Esophagus squamous epithelium (tissue), 5 donors: ENCODE measurements at regions of chr6 and their contacts with region 1.

Region 1: GRCh38 chr6:166097915-166098522 is 69.6 kb downstream of the TBXT start:
- DNase-seq: no peak
- H3K4me3 ChIP-seq: peak overlapping the region in 3 of 4 donors; percentile 25 to 42 (median 26)
- H3K27ac ChIP-seq: no peak overlapping the region
- H3K4me1 ChIP-seq: no peaks in the 10 kb centered on the region
- H3K27me3 ChIP-seq: peaks cover 0 to 8% (median 0%) of the 10 kb centered on the region in 4 donors
- CTCF ChIP-seq: peak; percentile 32 to 69 (median 56)
- POLR2A ChIP-seq: no peak

Region 2: DNA sequence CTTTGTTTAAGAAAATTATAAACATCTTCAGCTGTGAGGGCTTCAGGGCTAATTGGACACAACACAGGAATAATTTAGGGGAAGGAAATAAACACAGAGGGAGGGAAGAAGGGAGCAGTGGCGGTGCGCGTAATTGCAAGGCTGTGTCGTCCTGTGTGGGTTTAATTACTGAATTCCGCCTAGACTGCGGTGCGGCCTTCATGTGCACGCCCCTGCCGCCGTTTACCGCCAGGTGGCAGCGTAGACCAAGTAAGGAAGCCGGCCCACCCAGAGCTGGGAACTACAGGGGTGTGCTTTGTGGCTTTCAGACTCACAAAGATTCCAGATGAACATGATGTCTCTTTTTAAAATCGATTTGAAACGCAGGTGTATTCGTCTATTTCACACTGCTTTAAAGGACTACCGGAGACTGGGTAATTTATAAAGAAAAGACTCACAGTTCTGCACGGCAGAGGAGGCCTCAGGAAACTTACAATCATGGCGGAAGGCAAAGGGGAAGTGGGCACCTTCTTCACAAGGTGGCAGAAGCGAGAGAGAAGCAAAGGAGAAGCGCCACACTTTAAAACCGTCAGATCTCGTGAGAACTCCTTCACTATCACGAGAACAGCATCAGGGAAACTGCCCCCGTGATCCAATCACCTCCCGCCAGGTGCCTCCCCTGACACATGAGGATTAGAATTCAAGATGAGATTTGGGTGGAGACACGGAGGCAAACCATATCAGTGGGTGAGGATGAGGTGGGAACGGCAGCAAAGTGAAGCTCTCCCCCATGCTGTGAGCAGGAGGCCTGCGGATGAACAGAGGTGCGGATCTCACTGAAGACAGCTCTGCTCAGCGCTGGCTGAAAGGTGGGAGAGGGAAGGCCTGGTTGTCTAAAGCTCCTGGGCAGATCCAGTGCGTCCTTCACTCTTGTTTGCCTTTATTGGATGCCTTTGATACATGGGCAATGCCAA is 212.9 kb before region 1 on chr6:
- intact Hi-C with region 1: loop called (anchors 5 kb)
- DNase-seq: no peak
- H3K4me3 ChIP-seq: no peak overlapping the region
- H3K27ac ChIP-seq: no peak overlapping the region
- H3K4me1 ChIP-seq: peaks cover 0 to 7% (median 0%) of the 10 kb centered on the region in 3 donors
- H3K27me3 ChIP-seq: no peaks in the 10 kb centered on the region
- CTCF ChIP-seq: peak; percentile 60 to 78 (median 72)
- POLR2A ChIP-seq: no peak

Region 3: DNA sequence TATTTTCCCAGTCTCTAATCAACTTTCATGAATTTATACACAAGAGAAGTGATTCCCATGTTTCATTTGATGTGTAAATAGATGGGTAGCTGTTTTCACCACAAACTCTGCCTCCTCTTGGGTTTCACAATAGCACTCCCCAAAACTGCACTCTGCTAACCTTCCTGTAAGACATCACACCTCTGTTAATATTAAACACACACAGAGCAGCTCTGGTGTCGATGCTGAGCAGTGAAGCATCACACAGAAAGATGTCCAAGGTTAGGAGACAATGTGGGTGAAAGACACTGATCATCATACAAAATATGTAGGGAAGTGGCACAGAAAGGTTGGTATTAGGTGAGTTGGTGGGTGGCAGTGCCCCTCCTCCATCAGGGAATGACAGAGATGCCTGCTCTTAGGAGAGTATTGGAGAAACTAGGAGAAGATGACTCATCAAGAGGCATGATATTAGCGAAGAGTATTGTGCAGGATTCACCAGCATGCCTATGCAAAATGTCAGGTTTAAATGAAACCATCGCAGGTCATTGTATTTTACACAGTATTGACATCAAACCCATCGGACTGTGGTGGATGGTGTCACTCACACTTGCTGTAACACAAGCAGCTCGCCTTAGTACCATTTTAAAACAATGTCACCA is 130.1 kb before region 1 on chr6:
- intact Hi-C with region 1: no loop called
- DNase-seq: no peak
- H3K4me3 ChIP-seq: no peak overlapping the region
- H3K27ac ChIP-seq: no peak overlapping the region
- H3K4me1 ChIP-seq: no peaks in the 10 kb centered on the region
- H3K27me3 ChIP-seq: no peaks in the 10 kb centered on the region
- CTCF ChIP-seq: no peak
- POLR2A ChIP-seq: no peak